AG04450 (cell line): ENCODE measurements at regions of chr6 and their contacts with region 1.

Region 1: DNA sequence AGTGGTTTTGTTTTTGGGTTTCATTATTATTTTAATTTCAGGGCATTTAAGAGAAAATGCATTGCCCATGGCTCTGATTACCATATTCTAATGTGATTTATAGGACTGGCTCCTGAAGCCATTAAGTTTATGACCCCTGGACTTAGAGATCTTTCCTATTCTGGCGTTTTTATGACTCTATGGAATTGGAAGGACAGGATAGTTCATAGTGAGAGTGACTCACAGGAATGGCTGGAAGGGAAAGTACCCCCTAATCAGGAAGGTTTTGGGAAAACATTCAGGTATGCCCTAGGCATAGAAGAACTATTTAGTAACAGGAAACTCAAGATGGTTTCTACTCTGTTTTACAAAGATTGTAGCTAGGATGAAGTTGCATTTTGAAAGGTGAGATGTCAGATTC is 108.6 kb upstream of the SLC2A12 start:
- DNase-seq: no peak
- H3K4me3 ChIP-seq: no peak overlapping the region
- H3K27ac ChIP-seq: no peak overlapping the region
- H3K27me3 ChIP-seq: no peaks in the 10 kb centered on the region
- CTCF ChIP-seq: no peak

Region 2: GRCh38 chr6:134145786-134146185 is 15.2 kb before region 1 on chr6:
- CTCF ChIA-PET with region 1: interaction called, 10 read pairs
- POLR2A ChIA-PET with region 1: no interaction called
- DNase-seq: no peak
- H3K4me3 ChIP-seq: no peak overlapping the region
- H3K27ac ChIP-seq: peak overlapping the region; percentile 47
- H3K27me3 ChIP-seq: no peaks in the 10 kb centered on the region
- CTCF ChIP-seq: no peak

Region 3: GRCh38 chr6:134235937-134236751 is 75.1 kb after region 1 on chr6:
- CTCF ChIA-PET with region 1: no interaction called
- POLR2A ChIA-PET with region 1: no interaction called
- DNase-seq: peak; percentile 29
- H3K4me3 ChIP-seq: no peak overlapping the region
- H3K27ac ChIP-seq: peak overlapping the region; percentile 42
- H3K27me3 ChIP-seq: no peaks in the 10 kb centered on the region
- CTCF ChIP-seq: no peak

Region 4: DNA sequence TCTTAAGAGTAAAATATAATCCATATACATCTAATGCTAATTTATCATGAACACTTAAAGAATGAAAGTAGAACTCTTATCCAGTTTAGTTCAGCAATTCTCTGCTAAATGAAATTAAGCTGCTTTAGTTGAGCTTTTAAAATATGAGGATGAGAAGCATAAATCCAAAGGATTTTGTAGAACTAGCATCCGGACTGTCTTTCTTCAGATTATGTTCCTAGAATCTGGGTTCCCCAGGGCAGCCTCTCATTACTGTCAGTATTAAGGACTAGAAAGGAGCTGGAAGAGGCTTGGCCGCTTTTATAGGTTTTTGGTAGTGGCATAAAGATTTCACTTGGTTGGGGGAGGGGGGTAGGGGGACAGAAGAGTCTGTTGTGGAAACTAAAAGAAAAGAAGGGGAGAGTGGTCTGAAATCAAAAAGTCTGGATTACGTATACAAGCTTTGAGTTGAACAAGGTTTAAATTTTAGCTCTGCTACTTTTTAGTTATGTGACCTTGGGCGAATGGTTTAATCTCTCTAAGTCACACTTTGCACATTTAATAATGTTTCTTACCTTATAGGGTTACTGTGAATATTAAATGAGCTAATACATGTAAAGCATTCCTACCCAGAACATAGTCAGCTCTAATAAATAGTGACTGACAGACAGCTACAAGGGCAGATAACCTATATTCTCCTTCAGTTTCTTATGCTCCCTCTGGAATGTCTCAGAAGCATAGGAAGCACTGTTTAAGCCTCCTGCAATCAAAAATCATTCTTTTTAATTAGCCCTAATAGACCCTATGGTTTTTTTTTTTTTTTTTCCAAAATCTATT is 153.2 kb after region 1 on chr6:
- CTCF ChIA-PET with region 1: interaction called, 10 read pairs
- POLR2A ChIA-PET with region 1: no interaction called
- DNase-seq: no peak
- H3K4me3 ChIP-seq: no peak overlapping the region
- H3K27ac ChIP-seq: no peak overlapping the region
- H3K27me3 ChIP-seq: no peaks in the 10 kb centered on the region
- CTCF ChIP-seq: no peak

Region 5: GRCh38 chr6:134822920-134823709 is 662.1 kb after region 1 on chr6:
- CTCF ChIA-PET with region 1: interaction called, 40 read pairs
- POLR2A ChIA-PET with region 1: no interaction called
- DNase-seq: peak; percentile 66
- H3K4me3 ChIP-seq: no peak overlapping the region
- H3K27ac ChIP-seq: no peak overlapping the region
- H3K27me3 ChIP-seq: no peaks in the 10 kb centered on the region
- CTCF ChIP-seq: peak; percentile 95